ENCODE measurements at regions of chr1 and their contacts with region 1.

Region 1: DNA sequence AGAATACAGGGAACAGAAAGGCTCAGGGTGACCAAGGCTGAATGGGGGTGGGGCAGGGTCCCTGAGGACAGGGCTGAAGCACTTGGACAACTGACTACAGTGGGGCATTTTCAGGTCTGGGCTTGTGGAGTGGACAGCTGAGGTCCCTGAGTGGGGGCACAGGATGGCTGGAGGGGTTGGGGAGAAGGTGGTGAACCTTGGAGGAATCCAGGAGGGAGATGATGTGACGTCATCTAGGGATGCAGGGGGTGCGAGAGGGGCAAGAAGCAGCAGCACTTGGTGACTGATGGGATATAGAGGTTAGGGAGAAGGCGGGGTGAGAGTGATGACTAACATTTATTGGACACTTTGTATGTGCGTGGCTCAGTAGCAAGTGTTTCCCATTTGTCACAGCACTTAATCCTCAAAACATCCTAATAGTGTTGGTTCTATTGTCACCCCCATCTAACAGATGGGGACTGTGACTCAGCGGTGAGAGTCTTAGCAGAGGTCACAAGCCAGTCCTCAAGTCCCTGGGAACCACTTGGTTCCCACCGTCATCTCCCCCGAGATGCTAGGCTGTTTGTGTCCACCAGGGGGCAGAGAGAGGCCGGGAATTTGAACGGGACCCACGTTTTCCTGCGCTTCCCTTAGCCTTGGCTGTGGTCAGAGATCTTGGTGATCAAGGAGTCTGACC is 27.9 kb upstream of the BMP8B start:
- DNase-seq: peak; percentile 41 to 85 (median 51)
- ATAC-seq: peak; percentile 53 to 86 (median 82)
- H3K4me3 ChIP-seq: no peak overlapping the region
- H3K27ac ChIP-seq: no peak overlapping the region
- H3K4me1 ChIP-seq: peaks cover 0 to 3% (median 0%) of the 10 kb centered on the region in 12 donors
- H3K27me3 ChIP-seq: peaks cover 0 to 17% (median 0%) of the 10 kb centered on the region in 9 donors
- CTCF ChIP-seq: peak; percentile 64 to 88 (median 78)
- POLR2A ChIP-seq: no peak

Region 2: GRCh38 chr1:39886757-39887231 is 70.2 kb after region 1 on chr1:
- intact Hi-C with region 1: no loop called
- DNase-seq: no peak
- ATAC-seq: no peak
- H3K4me3 ChIP-seq: no peak overlapping the region
- H3K27ac ChIP-seq: no peak overlapping the region
- H3K4me1 ChIP-seq: peaks cover 0 to 27% (median 9%) of the 10 kb centered on the region in 12 donors
- H3K27me3 ChIP-seq: peaks cover 0 to 17% (median 0%) of the 10 kb centered on the region in 9 donors
- CTCF ChIP-seq: no peak
- POLR2A ChIP-seq: no peak

Region 3: GRCh38 chr1:39901698-39902459 is 85.3 kb after region 1 on chr1 and contains the start of gene MYCL:
- intact Hi-C with region 1: loop called (anchors 1 to 5 kb)
- DNase-seq: peak; percentile 53 to 83 (median 69)
- ATAC-seq: peak; percentile 65 to 88 (median 84)
- H3K4me3 ChIP-seq: peak within 1 kb of the TSS; percentile 43 to 78 (median 58)
- H3K27ac ChIP-seq: peak within 1 kb of the TSS in 3 of 12 donors; percentile 31 to 53 (median 42)
- H3K4me1 ChIP-seq: peaks cover 0 to 29% (median 9%) of the 10 kb centered on the region in 12 donors
- H3K27me3 ChIP-seq: peaks cover 0 to 73% (median 21%) of the 10 kb centered on the region in 9 donors
- CTCF ChIP-seq: peak; percentile 44 to 75 (median 71)
- POLR2A ChIP-seq: no peak
- total RNA-seq, gene MYCL: 0.27 to 3.0 (median 0.75) TPM

Region 4: GRCh38 chr1:39973503-39974135 is 157.1 kb after region 1 on chr1:
- intact Hi-C with region 1: loop called (anchors 1 to 2 kb)
- DNase-seq: peak; percentile 55 to 85 (median 75)
- ATAC-seq: peak; percentile 63 to 86 (median 84)
- H3K4me3 ChIP-seq: no peak overlapping the region
- H3K27ac ChIP-seq: no peak overlapping the region
- H3K4me1 ChIP-seq: peaks cover 0 to 5% (median 0%) of the 10 kb centered on the region in 12 donors
- H3K27me3 ChIP-seq: no peaks in the 10 kb centered on the region
- CTCF ChIP-seq: peak; percentile 93 to 99 (median 96)
- POLR2A ChIP-seq: no peak

Region 5: GRCh38 chr1:40079774-40080400 is 263.3 kb after region 1 on chr1:
- intact Hi-C with region 1: loop called in 1 of 10 experiments (anchors 5 kb)
- DNase-seq: no peak
- ATAC-seq: peak in 1 of 4 donors; percentile 27
- H3K4me3 ChIP-seq: no peak overlapping the region
- H3K27ac ChIP-seq: peak overlapping the region in 1 of 12 donors; percentile 81
- H3K4me1 ChIP-seq: peaks cover 0 to 78% (median 0%) of the 10 kb centered on the region in 12 donors
- H3K27me3 ChIP-seq: no peaks in the 10 kb centered on the region
- CTCF ChIP-seq: no peak
- POLR2A ChIP-seq: no peak

Measured in heart left ventricle (tissue), 16 donors.